Gastrocnemius medialis (tissue), 4 donors: ENCODE measurements at regions of chr20 and their contacts with region 1.

Region 1: GRCh38 chr20:62500237-62500864 is 24.6 kb upstream of the GATA5 start:
- DNase-seq: peak; percentile 66 to 79
- ATAC-seq: peak; percentile 62 to 78
- H3K4me3 ChIP-seq: no peak overlapping the region
- H3K27ac ChIP-seq: peak overlapping the region; percentile 35 to 63 (median 48)
- H3K4me1 ChIP-seq: peaks cover 19 to 33% of the 10 kb centered on the region in 2 donors
- H3K27me3 ChIP-seq: no peaks in the 10 kb centered on the region
- CTCF ChIP-seq: peak; percentile 93 to 98 (median 98)
- POLR2A ChIP-seq: no peak

Region 2: GRCh38 chr20:62302341-62303058 is 197.9 kb before region 1 on chr20 and contains the start of gene ADRM1:
- in situ Hi-C with region 1: no loop called
- intact Hi-C with region 1: loop called (anchors 5 kb)
- DNase-seq: peak; percentile 93 to 95
- ATAC-seq: peak; percentile 76 to 80
- H3K4me3 ChIP-seq: peak within 1 kb of the TSS; percentile 61 to 96 (median 70)
- H3K27ac ChIP-seq: peak within 1 kb of the TSS; percentile 90 to 100 (median 98)
- H3K4me1 ChIP-seq: peaks cover 25 to 39% of the 10 kb centered on the region in 2 donors
- H3K27me3 ChIP-seq: no peaks in the 10 kb centered on the region
- CTCF ChIP-seq: peak; percentile 95 to 99 (median 99)
- POLR2A ChIP-seq: peak; percentile 88 to 90
- total RNA-seq, gene ADRM1: 389 to 644 (median 611) TPM

Region 3: DNA sequence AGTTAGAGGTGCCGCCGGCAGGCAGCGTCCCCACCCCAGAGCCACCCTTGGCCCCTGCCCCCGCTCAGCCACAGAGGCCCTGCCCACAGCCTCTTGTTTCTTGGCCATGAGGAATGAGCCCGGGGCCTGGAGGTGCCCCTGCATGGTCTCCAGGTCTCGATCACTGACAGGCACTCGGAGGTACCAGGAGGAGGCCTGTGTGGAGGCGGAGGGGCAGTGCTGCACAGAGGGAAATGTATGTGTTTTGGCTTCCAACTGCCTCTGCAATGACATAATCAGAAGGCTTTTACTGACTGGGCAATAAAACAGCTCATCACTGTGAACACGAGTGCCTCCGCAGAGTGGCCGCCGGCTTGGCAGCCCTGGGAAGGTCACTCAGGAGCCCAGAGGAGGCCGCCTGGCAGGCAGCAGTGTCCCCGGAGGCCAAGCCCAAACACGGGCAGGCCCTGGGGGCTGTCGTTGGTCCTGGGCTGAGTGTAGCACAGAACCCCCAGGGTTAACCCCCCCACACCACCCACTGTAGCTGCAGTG is 36.6 kb after region 1 on chr20:
- in situ Hi-C with region 1: no loop called
- intact Hi-C with region 1: no loop called
- DNase-seq: peak; percentile 74 to 88
- ATAC-seq: peak; percentile 60 to 67
- H3K4me3 ChIP-seq: no peak overlapping the region
- H3K27ac ChIP-seq: peak overlapping the region; percentile 98
- H3K4me1 ChIP-seq: peaks cover 52 to 59% of the 10 kb centered on the region in 2 donors
- H3K27me3 ChIP-seq: no peaks in the 10 kb centered on the region
- CTCF ChIP-seq: no peak
- POLR2A ChIP-seq: peak; percentile 42 to 64

Region 4: GRCh38 chr20:62571667-62572344 is 71.5 kb after region 1 on chr20:
- in situ Hi-C with region 1: loop called in 1 of 4 experiments (anchors 10 kb)
- intact Hi-C with region 1: no loop called
- DNase-seq: peak in 1 of 2 donors; percentile 48
- ATAC-seq: no peak
- H3K4me3 ChIP-seq: no peak overlapping the region
- H3K27ac ChIP-seq: peak overlapping the region; percentile 4 to 100 (median 86)
- H3K4me1 ChIP-seq: peaks cover 0 to 10% of the 10 kb centered on the region in 2 donors
- H3K27me3 ChIP-seq: no peaks in the 10 kb centered on the region
- CTCF ChIP-seq: peak in 1 of 5 experiments; percentile 15
- POLR2A ChIP-seq: no peak

Region 5: DNA sequence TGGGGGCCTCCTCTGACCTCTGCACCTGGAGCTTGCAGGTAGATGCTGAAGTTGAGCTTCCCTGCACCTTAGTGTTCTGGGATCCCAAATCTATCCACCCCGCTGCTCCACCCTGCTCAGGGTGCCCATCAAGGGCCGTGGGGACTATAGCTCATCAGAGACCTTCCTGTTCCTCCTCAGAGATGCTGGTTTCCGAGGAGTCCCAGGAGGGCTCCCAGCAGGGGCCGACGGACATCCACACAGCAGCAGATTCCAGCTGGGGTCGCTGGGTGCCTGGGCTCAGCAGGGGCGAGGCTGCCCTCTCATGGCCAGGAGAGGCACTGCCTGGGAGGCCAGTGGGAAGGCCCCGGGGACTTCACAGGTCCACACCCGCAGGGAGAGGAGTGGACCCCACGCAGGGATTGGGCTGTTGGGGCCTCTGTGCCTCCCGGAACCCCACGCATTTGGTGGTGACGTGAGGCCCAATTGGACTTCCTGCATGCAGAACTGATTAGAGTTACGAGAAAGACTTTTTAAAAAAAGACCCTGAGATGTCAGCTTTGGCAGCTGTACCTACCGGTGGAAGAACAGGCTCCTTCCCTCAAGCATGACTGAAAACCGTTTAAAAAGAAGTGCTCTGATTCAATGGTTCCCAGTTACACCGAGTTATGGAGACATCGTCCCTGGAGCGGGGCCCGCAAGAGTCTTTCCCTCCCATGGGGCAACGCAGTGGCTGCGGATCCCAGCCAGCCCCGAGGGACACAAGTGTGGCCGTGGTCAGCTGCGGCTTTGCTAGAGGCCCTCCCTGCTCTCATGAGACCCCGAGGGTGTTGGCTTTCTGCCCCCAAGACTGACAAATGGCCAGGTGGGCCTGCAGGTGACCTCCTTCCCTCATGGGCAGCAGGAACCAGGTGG is 116.6 kb after region 1 on chr20:
- in situ Hi-C with region 1: loop called in 3 of 4 experiments (anchors 5 to 25 kb)
- intact Hi-C with region 1: loop called (anchors 1 kb)
- DNase-seq: peak in 1 of 2 donors; percentile 66
- ATAC-seq: peak; percentile 61 to 71
- H3K4me3 ChIP-seq: no peak overlapping the region
- H3K27ac ChIP-seq: peak overlapping the region; percentile 53 to 84 (median 80)
- H3K4me1 ChIP-seq: peaks cover 9 to 19% of the 10 kb centered on the region in 2 donors
- H3K27me3 ChIP-seq: peaks cover 1 to 5% (median 3%) of the 10 kb centered on the region in 3 donors
- CTCF ChIP-seq: peak; percentile 91 to 98 (median 96)
- POLR2A ChIP-seq: no peak

Region 6: DNA sequence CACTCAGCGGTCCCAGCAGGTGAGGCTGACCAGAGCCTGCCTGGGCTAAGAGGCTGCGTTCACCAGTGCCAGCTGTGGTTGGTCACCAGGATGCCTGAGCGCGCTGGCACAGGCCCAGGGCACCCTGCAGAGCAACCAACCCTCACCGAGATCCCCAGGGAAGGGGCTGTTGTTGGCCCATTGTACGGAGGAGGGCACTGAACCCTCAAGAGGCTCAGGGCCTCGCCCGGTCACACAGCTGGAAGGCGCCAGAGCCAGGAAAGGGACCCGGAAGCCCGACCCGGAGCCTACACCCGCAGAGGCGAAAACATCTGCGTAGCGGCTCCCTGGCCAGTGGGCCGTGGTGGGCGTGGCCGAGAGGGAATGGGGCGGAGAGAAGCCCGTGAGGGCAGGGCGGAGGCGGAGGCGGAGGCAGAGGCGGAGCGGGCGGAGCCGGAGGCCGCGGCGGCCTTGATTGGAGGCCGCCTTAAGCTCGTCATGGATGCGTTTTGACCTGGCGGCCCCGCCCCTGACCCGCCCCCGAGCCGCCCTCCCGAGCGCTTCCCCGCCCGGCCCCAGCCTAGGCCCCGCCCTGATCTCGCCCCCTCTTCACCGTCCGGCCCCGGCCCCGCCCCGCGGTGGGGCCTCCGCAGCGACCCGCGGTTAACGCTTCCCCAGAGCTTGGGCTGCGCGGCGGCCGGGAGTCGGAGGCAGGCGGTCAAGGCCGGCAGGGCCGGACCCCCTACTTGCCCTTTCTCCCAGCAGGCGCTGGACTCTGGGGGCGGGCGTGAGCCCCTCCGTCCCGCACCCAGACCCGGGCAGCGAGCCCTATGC is 293.8 kb after region 1 on chr20:
- in situ Hi-C with region 1: no loop called
- intact Hi-C with region 1: loop called (anchors 1 kb)
- DNase-seq: peak; percentile 89 to 92
- ATAC-seq: peak; percentile 78
- H3K4me3 ChIP-seq: peak overlapping the region; percentile 75 to 89 (median 76)
- H3K27ac ChIP-seq: peak overlapping the region; percentile 89 to 93 (median 92)
- H3K4me1 ChIP-seq: peaks cover 13 to 15% of the 10 kb centered on the region in 2 donors
- H3K27me3 ChIP-seq: no peaks in the 10 kb centered on the region
- CTCF ChIP-seq: no peak
- POLR2A ChIP-seq: peak; percentile 85 to 93